Activated B cell treated with CpG ODN at 0.5 μM for 24 hours (primary cell): ENCODE measurements at regions of chr13 and their contacts with region 1.

Region 1: DNA sequence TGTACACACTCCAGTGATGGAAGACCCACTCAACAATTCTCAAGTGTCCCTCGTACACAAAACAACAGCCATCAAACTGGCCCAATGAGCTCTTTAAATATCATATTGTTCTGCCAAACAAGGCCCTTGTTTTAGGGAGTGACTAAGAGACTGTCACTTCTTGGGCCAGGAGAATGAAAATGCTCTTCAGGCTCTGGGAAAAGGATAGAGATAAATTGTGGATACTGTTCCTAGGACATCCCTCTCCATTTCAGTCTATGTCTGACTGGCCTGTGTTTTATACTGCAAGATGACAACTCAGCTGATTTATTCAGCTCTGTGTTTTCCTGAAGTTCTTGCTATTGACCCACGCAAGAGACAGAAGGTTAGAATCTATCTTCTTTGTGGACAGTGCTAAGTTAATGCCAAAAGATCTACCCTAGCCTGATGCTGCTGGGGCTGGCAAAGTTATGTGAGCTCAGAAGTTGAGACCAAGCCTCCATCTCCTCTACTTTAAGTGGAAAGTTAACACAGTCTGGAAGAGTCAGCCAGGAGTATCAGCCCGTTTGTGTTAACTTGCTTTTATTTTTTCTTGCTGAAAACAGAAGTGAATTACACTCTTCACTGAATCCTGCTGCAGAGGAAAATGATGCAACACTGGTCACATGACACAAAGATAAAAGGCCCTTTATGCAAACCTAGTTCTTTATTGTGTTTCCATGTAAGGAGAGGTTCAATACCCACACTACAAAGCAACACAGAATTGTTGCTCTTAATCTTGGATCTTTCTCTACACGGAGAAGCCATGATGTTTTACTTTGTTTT is 14.6 kb downstream of the FRY start:
- DNase-seq: no peak
- ATAC-seq: peak; percentile 54
- H3K4me3 Mint-ChIP-seq: peak overlapping the region; percentile 63
- H3K27ac Mint-ChIP-seq: peak overlapping the region; percentile 48
- H3K4me1 Mint-ChIP-seq: peaks cover 42% of the 10 kb centered on the region
- H3K27me3 Mint-ChIP-seq: no peaks in the 10 kb centered on the region
- CTCF ChIP-seq: no peak

Region 2: GRCh38 chr13:31987535-31988170 is 58.5 kb before region 1 on chr13:
- CTCF ChIA-PET with region 1: no interaction called
- POLR2A ChIA-PET with region 1: interaction called, 10 read pairs
- intact Hi-C with region 1: no loop called
- DNase-seq: no peak
- ATAC-seq: peak; percentile 71
- H3K4me3 Mint-ChIP-seq: no peak overlapping the region
- H3K27ac Mint-ChIP-seq: no peak overlapping the region
- H3K4me1 Mint-ChIP-seq: peaks cover 9% of the 10 kb centered on the region
- H3K27me3 Mint-ChIP-seq: no peaks in the 10 kb centered on the region
- CTCF ChIP-seq: no peak